ENCODE measurements at regions of chr1 and their contacts with region 1.

Region 1: GRCh38 chr1:116556289-116557006 is 14.4 kb downstream of the CD58 start:
- DNase-seq: peak; percentile 93
- ATAC-seq: peak; percentile 94
- H3K4me3 Mint-ChIP-seq: peak overlapping the region; percentile 48
- H3K27ac Mint-ChIP-seq: peak overlapping the region; percentile 95
- H3K4me1 Mint-ChIP-seq: peaks cover 84% of the 10 kb centered on the region
- H3K27me3 Mint-ChIP-seq: no peaks in the 10 kb centered on the region

Region 2: GRCh38 chr1:116360429-116361173 is 195.8 kb before region 1 on chr1:
- CTCF ChIA-PET with region 1: no interaction called
- DNase-seq: no peak
- ATAC-seq: no peak
- H3K4me3 Mint-ChIP-seq: no peak overlapping the region
- H3K27ac Mint-ChIP-seq: no peak overlapping the region
- H3K4me1 Mint-ChIP-seq: peaks cover 5% of the 10 kb centered on the region
- H3K27me3 Mint-ChIP-seq: peaks cover 3% of the 10 kb centered on the region

Region 3: DNA sequence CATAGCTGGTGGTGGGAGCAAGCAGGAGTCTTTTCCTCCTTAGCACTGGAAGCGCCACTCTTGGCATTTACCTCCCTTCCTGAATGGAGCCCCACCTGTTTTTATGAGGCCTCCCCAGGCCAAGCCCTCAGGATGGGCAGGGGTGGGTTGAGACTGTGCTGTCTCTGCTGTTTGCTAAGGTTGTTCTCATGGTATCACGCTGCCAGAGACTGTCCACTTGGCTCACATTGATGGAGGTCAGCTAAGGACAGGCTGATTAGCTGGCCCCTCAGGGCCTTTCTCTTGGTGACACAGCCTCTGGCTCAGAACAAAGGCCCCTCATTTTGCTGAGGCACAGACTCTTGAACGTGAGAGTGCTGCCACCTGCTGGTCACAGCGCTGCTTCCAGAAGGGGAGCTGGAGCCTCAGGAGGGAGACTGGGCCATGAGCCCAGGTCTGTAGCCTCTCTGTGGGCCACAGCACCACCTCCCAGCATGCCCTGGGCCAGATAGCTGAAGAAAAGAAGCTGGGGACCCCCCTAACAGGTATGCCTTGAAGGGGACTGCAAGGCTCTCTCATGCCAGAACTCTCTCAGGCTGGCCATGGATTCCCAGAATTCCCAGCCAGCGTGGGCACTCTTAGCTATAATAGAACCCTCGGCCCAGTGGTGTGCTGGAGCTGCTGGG is 71.2 kb before region 1 on chr1:
- CTCF ChIA-PET with region 1: no interaction called
- DNase-seq: peak; percentile 90
- ATAC-seq: peak; percentile 93
- H3K4me3 Mint-ChIP-seq: no peak overlapping the region
- H3K27ac Mint-ChIP-seq: no peak overlapping the region
- H3K4me1 Mint-ChIP-seq: peaks cover 9% of the 10 kb centered on the region
- H3K27me3 Mint-ChIP-seq: no peaks in the 10 kb centered on the region

Region 4: DNA sequence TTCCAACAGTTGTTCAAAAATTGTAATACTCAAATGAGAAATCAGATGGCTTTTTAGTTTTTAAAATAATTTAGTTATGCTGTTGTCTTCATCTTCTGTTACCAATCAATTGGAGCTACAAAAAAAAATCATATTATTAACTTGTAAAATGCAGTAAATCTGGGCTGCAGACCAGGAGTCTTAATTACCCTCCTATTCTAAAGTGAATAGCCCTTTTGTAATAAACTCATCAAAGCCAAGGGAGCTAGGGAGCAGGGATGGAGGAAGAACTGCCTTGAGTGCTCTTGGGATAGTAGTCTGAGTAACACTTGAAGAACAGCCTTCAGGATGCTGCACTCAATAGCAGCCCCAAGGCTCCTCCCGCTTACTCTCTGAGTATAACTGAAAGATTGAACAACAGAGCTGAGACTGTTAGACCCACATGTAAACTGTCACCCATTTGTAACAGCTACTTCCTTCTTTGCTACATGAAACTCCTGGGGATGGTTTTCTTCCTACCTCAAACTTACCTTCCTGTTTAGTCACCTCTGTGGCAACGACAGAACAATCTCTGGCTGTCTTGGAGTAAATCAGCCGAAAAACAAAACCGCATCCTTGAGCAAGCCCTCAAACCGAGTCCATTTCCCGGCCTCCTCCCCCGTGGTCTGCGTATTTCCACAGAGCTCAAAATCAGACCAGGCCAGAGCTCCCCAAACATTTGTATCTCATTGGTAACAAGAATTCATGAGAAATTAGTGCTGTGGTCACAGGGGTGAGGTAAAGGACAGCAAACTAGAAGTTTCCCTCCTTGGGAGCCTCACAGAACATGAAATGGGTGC is 41.5 kb before region 1 on chr1:
- CTCF ChIA-PET with region 1: interaction called, 13 read pairs
- DNase-seq: peak; percentile 86
- ATAC-seq: peak; percentile 83
- H3K4me3 Mint-ChIP-seq: peak overlapping the region; percentile 39
- H3K27ac Mint-ChIP-seq: peak overlapping the region; percentile 93
- H3K4me1 Mint-ChIP-seq: peaks cover 77% of the 10 kb centered on the region
- H3K27me3 Mint-ChIP-seq: no peaks in the 10 kb centered on the region

Region 5: DNA sequence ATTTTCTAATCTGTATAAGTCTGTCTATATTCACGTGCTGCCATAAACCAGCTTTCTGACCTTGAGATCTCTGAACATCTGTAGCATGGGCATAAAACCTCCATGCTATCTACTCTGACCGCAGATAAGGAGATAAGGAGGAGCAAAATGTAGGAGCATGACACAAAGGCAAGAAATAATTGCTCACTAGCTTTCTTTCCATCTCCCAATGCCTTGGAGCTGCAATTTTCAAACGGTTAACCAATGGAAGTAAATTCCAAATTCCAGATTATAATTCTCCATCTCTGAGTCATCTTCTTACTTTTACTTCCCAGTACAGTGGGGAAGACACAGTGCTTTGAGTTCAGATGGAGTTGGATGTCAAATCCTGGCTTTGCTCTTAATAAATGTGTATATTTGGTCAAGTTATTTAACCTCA is 27.2 kb before region 1 on chr1:
- CTCF ChIA-PET with region 1: no interaction called
- DNase-seq: no peak
- ATAC-seq: no peak
- H3K4me3 Mint-ChIP-seq: no peak overlapping the region
- H3K27ac Mint-ChIP-seq: no peak overlapping the region
- H3K4me1 Mint-ChIP-seq: peaks cover 17% of the 10 kb centered on the region
- H3K27me3 Mint-ChIP-seq: no peaks in the 10 kb centered on the region

Region 6: DNA sequence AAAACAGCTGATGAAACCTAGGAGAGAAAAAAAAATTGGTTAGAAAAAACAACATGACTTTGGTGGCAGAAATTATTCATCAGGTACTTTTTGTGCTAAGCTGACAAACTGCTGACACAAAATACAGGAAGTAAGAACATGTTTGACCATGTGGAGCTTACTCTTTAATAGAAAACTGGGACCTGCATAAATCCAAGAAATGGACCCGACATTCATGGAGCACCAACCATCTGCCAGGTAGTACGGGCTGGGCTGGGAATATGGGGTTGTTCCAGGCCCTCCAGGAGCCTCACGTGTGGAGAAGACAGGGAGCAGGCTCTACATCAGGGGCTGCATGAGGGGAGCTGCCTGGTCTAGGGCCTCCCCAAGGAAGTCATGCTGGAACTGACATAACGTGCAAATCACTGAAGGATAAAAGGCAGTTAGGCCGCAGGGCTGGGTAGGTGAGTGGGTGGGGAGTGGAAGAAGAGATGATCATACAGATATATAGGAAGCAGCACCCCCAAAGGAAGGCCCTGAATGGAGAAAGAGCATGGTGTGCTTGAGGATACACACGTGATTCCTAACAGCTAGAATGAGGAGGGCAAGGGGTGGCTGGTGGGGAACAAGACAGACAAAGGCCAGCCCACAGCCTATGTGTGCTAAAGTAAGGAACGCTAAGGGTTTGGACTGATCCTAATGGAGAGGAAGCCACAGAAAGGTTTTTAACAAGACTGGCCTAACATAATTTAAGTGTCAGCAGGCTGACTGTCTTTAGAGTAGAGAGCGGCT is 11.7 kb before region 1 on chr1:
- CTCF ChIA-PET with region 1: interaction called, 11 read pairs
- DNase-seq: peak; percentile 62
- ATAC-seq: peak; percentile 57
- H3K4me3 Mint-ChIP-seq: peak overlapping the region; percentile 17
- H3K27ac Mint-ChIP-seq: peak overlapping the region; percentile 82
- H3K4me1 Mint-ChIP-seq: peaks cover 81% of the 10 kb centered on the region
- H3K27me3 Mint-ChIP-seq: no peaks in the 10 kb centered on the region

Region 7: DNA sequence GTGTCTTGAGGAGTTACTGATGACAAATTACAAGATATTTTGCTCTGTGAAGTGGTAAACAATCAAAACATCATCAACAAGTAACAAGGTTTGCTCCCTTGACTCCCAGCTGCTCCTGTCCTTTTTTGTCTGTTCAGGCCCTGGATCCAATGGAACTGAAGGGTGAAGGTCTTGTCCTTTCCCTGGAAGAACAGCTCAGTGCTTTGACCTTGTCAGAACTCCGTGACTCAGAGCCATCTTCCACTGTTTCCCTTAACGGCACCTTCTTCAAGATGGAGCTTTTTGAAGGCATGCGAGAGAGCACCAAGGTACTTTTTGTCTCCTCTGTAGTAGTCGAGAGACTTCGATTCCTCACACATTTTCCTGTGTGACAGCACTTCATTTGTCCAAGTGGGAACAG is 536.1 kb after region 1 on chr1:
- CTCF ChIA-PET with region 1: no interaction called
- DNase-seq: no peak
- ATAC-seq: no peak
- H3K4me3 Mint-ChIP-seq: no peak overlapping the region
- H3K27ac Mint-ChIP-seq: peak overlapping the region; percentile 11
- H3K4me1 Mint-ChIP-seq: peaks cover 20% of the 10 kb centered on the region
- H3K27me3 Mint-ChIP-seq: no peaks in the 10 kb centered on the region